HEK293T (cell line): ENCODE measurements at regions of chr6 and their contacts with region 1.

Region 1: DNA sequence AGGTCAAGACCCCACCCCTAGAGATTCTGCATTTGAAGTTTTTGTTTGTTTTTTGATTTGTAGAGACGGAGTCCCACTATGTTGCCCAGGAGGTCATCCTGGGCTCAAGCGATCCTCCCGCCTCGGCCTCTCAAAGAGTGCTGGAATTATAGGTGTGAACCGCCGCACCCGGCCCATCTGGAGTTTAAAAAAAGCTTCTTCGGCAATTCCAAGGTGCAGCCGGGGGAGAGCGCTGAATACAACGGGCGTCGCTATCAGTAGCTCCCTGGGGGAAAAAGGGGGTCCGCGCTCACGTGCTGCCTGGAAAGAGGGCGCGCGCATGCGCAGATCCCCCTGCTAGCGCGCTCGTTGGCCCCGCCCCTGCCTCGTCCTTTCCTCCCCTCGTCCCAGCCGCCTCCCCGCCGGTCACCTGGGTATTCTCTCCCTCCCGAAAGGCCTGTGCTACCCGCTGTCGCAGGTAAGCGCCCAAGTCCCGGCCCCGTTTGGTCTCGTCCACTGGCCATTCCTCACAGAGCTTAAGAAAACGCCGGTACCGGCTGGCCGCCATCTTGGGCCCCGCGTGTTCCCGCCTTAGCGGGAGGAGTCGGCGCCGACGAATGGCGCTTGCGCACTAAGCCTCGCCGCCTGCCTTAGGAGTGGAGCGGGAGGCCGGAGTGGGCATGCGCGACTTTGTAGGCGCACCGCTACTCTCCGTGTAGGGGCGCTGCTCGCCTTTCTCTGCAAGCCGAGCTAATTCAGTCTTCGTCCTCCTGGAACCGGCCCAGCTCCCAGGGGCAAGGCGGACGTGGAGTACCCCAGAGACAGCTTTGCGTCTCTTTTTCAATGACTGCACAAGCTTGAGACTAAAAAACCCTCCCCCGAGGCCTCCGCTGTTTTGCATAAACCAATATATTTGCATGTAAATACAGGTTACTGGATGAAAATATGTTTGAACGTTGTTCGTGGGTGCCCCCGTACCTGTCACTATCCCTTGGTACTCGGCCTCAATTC is at the start of gene UQCC2:
- DNase-seq: peak; percentile 97

Region 2: DNA sequence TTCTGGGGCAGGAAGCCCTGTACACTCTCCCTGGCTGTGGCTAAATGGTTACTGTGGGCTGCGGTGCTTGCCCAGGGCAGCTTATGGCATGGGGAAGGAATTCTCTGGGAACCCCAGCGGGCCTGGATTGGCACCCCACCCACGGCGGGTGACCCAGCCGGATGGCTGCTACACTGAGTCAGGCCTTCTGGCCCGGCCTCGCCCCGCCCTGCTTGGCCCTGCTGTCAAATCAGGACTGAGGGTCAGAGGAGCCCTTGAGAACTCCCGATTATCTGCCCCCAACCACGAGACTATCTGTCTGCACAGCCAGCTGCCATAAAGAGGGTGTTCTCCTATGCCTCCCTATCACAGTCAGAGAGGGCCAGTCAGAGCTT is 97.7 kb before region 1 on chr6:
- CTCF ChIA-PET with region 1: no interaction called
- POLR2A ChIA-PET with region 1: no interaction called
- DNase-seq: no peak

Region 3: DNA sequence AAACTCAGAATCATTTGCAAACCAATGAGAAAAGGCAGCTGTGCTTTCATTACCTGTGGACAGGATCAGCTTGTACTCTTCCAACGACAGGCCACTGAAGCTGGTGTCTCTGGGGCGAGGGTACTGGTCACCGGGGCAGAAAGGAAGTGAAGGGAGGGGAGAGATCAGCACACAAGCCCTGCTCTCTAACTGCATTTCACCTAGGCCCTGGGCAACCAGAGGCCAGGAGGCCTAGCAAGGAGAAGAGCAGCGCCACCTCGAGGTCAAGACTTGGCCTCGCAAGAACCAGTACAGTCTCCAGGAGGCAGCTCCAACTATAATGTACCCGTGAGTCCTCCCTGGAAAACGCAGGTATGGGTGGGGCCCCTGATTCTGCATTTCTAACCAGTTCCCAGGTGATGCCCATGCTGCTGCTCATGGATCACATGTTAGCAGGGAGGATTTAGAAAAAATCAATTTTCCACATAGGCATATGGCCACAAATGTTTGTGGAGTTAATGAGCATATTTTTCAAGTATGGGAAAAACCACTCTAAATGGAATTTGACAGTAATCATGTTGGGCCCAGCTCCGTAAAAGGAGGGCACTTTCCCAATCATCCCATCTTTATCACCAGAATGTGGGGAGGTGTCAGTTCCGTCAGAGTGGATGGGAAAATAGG is 10.9 kb before region 1 on chr6:
- CTCF ChIA-PET with region 1: interaction called, 7 read pairs
- POLR2A ChIA-PET with region 1: interaction called, 15 read pairs
- DNase-seq: peak; percentile 74

Region 4: GRCh38 chr6:33737267-33738026 is 26.0 kb after region 1 on chr6:
- CTCF ChIA-PET with region 1: no interaction called
- POLR2A ChIA-PET with region 1: interaction called, 10 read pairs
- DNase-seq: no peak

Region 5: GRCh38 chr6:33761922-33762629 is 50.6 kb after region 1 on chr6:
- CTCF ChIA-PET with region 1: interaction called, 4 read pairs
- POLR2A ChIA-PET with region 1: interaction called, 22 read pairs
- DNase-seq: peak; percentile 50

Region 6: GRCh38 chr6:34154668-34155447 is 443.4 kb after region 1 on chr6:
- CTCF ChIA-PET with region 1: no interaction called
- POLR2A ChIA-PET with region 1: no interaction called
- DNase-seq: peak; percentile 87

Region 7: DNA sequence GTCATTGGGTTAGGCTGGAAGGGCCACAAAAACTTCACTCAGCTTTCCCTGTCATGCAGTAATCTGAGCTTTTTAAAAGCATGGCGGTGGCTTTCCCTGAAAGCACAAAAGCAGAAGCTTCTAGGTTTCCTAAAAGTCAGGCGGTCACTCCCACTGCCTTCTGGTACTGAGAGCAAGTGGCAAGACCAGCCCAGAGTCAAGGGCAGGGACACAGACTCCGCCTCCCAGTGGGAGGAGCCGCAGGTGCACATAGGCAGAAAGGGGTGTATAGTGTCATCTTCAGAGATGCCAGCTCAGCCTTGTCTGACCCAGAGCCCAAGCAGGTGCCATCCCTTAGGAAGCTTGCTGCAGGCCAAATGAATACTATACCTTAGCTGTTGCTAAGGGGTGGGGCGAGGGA is 736.5 kb after region 1 on chr6:
- CTCF ChIA-PET with region 1: no interaction called
- POLR2A ChIA-PET with region 1: no interaction called
- DNase-seq: no peak